Activated CD4-positive, alpha-beta T cell treated with anti-CD3 and anti-CD28 coated beads, Interleukin-2, amount 10 ng/mL, durations not matched to agents 24 days and 14 days (primary cell): ENCODE measurements at regions of chr2 and their contacts with region 1.

Region 1: GRCh38 chr2:237072067-237072931 is 13.4 kb upstream of the COPS8 start:
- DNase-seq: peak; percentile 91
- H3K4me3 Mint-ChIP-seq: no peak overlapping the region
- H3K27ac Mint-ChIP-seq: no peak overlapping the region
- H3K4me1 Mint-ChIP-seq: no peaks in the 10 kb centered on the region
- H3K27me3 Mint-ChIP-seq: no peaks in the 10 kb centered on the region

Region 2: DNA sequence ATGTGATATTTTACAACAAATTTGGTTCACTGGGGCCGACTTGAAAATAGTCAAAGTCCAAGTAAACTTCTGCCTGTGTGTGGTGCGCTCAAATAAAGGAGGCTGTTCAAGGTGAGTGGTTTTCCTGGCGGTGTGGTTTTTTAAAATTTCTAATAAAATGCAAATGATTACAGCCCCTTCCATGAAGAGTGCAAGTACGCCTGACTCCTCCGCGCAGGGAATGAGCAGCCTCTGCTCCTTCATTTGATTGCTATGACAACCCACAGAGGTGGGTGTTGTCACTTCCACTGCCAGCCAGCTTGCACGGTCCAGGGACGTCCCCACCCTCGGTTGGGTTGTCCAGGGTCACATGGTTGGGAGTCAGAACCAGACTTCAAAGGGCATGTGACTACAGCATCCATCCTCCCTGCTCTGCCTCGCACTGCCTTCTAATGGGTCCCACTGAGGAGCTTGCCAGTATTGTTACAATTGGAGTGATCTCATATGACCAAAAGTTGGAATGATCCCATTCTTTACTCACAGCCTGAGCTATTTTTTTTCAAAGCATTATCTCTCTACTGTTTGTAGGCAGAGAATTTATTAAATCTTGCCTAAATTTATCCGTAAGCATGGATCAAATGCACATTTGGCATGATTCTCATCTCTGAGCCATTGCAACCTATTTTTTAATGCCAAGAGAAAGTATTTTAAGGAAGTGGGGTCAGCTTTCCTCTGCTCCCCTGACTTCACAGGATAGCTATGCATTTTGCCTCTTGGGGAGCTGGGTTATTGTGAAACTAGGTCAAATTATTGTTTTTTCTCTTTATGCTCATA is 1457.2 kb before region 1 on chr2:
- intact Hi-C with region 1: no loop called
- DNase-seq: no peak
- H3K4me3 Mint-ChIP-seq: no peak overlapping the region
- H3K27ac Mint-ChIP-seq: no peak overlapping the region
- H3K4me1 Mint-ChIP-seq: no peaks in the 10 kb centered on the region
- H3K27me3 Mint-ChIP-seq: no peaks in the 10 kb centered on the region

Region 3: GRCh38 chr2:235779444-235779896 is 1292.8 kb before region 1 on chr2:
- intact Hi-C with region 1: loop called (anchors 10 kb)
- DNase-seq: peak; percentile 88
- H3K4me3 Mint-ChIP-seq: no peak overlapping the region
- H3K27ac Mint-ChIP-seq: no peak overlapping the region
- H3K4me1 Mint-ChIP-seq: no peaks in the 10 kb centered on the region
- H3K27me3 Mint-ChIP-seq: peaks cover 12% of the 10 kb centered on the region

Region 4: GRCh38 chr2:236343400-236344161 is 728.7 kb before region 1 on chr2:
- intact Hi-C with region 1: loop called (anchors 1 kb)
- DNase-seq: peak; percentile 80
- H3K4me3 Mint-ChIP-seq: no peak overlapping the region
- H3K27ac Mint-ChIP-seq: no peak overlapping the region
- H3K4me1 Mint-ChIP-seq: no peaks in the 10 kb centered on the region
- H3K27me3 Mint-ChIP-seq: no peaks in the 10 kb centered on the region

Region 5: GRCh38 chr2:236352761-236353593 is 719.3 kb before region 1 on chr2:
- intact Hi-C with region 1: loop called (anchors 2 kb)
- DNase-seq: peak; percentile 77
- H3K4me3 Mint-ChIP-seq: no peak overlapping the region
- H3K27ac Mint-ChIP-seq: no peak overlapping the region
- H3K4me1 Mint-ChIP-seq: peaks cover 2% of the 10 kb centered on the region
- H3K27me3 Mint-ChIP-seq: no peaks in the 10 kb centered on the region

Region 6: DNA sequence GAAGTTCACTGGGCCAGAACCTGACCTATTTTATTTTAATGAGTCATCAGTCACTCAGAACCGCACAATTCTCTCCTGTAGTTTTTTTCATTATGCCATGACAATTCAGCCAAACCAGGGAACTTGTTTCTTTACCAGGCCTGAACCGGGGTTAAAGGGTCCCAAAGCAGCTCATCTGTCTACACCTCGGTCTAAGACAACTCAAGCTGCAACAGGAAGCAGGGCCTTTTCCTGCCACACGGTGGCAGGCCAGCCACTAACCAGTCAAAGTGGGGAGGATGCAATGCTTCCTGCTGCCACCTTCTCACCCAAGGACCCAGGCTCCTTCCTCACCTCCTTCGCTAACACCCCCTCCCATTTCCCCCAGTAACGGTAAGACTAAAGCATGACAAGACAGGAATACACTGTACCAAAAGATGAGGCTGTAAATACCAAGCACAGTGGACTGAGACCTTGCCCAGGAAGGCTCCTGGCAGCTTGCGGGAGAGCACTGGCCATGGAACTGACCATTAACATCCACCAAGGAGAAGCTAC is 559.3 kb before region 1 on chr2:
- intact Hi-C with region 1: loop called (anchors 5 kb)
- DNase-seq: peak; percentile 90
- H3K4me3 Mint-ChIP-seq: no peak overlapping the region
- H3K27ac Mint-ChIP-seq: no peak overlapping the region
- H3K4me1 Mint-ChIP-seq: peaks cover 2% of the 10 kb centered on the region
- H3K27me3 Mint-ChIP-seq: peaks cover 36% of the 10 kb centered on the region

Region 7: GRCh38 chr2:236569573-236569973 is 502.7 kb before region 1 on chr2 and contains the start of gene ACKR3:
- intact Hi-C with region 1: loop called (anchors 5 kb)
- DNase-seq: peak; percentile 92
- H3K4me3 Mint-ChIP-seq: peak within 1 kb of the TSS; percentile 81
- H3K27ac Mint-ChIP-seq: no peak within 1 kb of the TSS
- H3K4me1 Mint-ChIP-seq: peaks cover 17% of the 10 kb centered on the region
- H3K27me3 Mint-ChIP-seq: peaks cover 11% of the 10 kb centered on the region
- total RNA-seq, gene ACKR3: 0.58 and 0.64 TPM in 2 replicates

Region 8: GRCh38 chr2:237060534-237061312 is 11.6 kb before region 1 on chr2:
- intact Hi-C with region 1: no loop called
- DNase-seq: no peak
- H3K4me3 Mint-ChIP-seq: no peak overlapping the region
- H3K27ac Mint-ChIP-seq: no peak overlapping the region
- H3K4me1 Mint-ChIP-seq: peaks cover 16% of the 10 kb centered on the region
- H3K27me3 Mint-ChIP-seq: no peaks in the 10 kb centered on the region